ENCODE measurements at regions of chr3 and their contacts with region 1.

Region 1: GRCh38 chr3:46909535-46910442 is 32.3 kb downstream of the PTH1R start:
- DNase-seq: peak; percentile 92
- H3K4me3 ChIP-seq: no peak overlapping the region
- H3K27ac ChIP-seq: no peak overlapping the region
- H3K4me1 ChIP-seq: peaks cover 0 to 24% (median 19%) of the 10 kb centered on the region in 4 donors
- H3K27me3 ChIP-seq: no peaks in the 10 kb centered on the region
- CTCF ChIP-seq: peak; percentile 79 to 82 (median 80)
- EP300 ChIP-seq: no peak
- POLR2A ChIP-seq: no peak

Region 2: GRCh38 chr3:46845791-46846623 is 63.8 kb before region 1 on chr3:
- intact Hi-C with region 1: no loop called
- DNase-seq: peak; percentile 90
- H3K4me3 ChIP-seq: peak overlapping the region; percentile 36 to 59 (median 55)
- H3K27ac ChIP-seq: peak overlapping the region; percentile 80 to 87 (median 82)
- H3K4me1 ChIP-seq: peaks cover 0 to 27% (median 14%) of the 10 kb centered on the region in 4 donors
- H3K27me3 ChIP-seq: no peaks in the 10 kb centered on the region
- CTCF ChIP-seq: peak; percentile 25 to 67 (median 46)
- EP300 ChIP-seq: no peak
- POLR2A ChIP-seq: no peak

Region 3: GRCh38 chr3:46866720-46867549 is 42.9 kb before region 1 on chr3:
- intact Hi-C with region 1: loop called (anchors 1 kb)
- DNase-seq: peak; percentile 92
- H3K4me3 ChIP-seq: no peak overlapping the region
- H3K27ac ChIP-seq: peak overlapping the region; percentile 60 to 69 (median 64)
- H3K4me1 ChIP-seq: peaks cover 0 to 27% (median 22%) of the 10 kb centered on the region in 4 donors
- H3K27me3 ChIP-seq: no peaks in the 10 kb centered on the region
- CTCF ChIP-seq: peak; percentile 85 to 91 (median 89)
- EP300 ChIP-seq: no peak
- POLR2A ChIP-seq: no peak

Region 4: DNA sequence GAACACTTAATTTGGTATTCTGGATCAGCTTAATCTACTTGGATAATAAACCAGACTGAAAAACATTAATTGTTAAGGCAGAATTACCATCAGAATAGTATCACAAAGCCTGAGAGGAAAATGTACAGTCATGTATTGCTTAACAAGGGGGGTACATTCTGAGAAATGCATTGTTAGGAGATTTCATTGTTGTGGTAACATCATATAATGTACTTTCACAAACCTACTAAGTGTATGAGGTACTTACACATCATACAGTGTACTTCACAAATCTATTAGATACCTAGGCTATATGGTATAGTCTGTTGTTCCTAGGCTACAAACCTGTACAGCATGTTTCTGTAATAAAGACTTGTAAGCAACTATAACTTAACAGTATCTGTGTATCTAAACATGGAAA is 137.9 kb after region 1 on chr3:
- intact Hi-C with region 1: no loop called
- DNase-seq: no peak
- H3K4me3 ChIP-seq: no peak overlapping the region
- H3K27ac ChIP-seq: no peak overlapping the region
- H3K4me1 ChIP-seq: peaks cover 0 to 15% (median 2%) of the 10 kb centered on the region in 4 donors
- H3K27me3 ChIP-seq: no peaks in the 10 kb centered on the region
- CTCF ChIP-seq: no peak
- EP300 ChIP-seq: no peak
- POLR2A ChIP-seq: no peak

Region 5: GRCh38 chr3:47324278-47324865 is 414.6 kb after region 1 on chr3:
- intact Hi-C with region 1: loop called (anchors 10 kb)
- DNase-seq: peak; percentile 74
- H3K4me3 ChIP-seq: no peak overlapping the region
- H3K27ac ChIP-seq: no peak overlapping the region
- H3K4me1 ChIP-seq: peaks cover 0 to 4% (median 2%) of the 10 kb centered on the region in 4 donors
- H3K27me3 ChIP-seq: no peaks in the 10 kb centered on the region
- CTCF ChIP-seq: peak in 3 of 4 experiments; percentile 53 to 69 (median 54)
- EP300 ChIP-seq: no peak
- POLR2A ChIP-seq: no peak